Panc1 (cell line): ENCODE measurements at regions of chr12 and their contacts with region 1.

Region 1: GRCh38 chr12:4037747-4038312 is 164.6 kb upstream of the PARP11 start:
- DNase-seq: no peak
- ATAC-seq: no peak
- H3K4me3 ChIP-seq: no peak overlapping the region
- H3K27ac ChIP-seq: no peak overlapping the region
- H3K4me1 ChIP-seq: no peaks in the 10 kb centered on the region
- H3K27me3 ChIP-seq: no peaks in the 10 kb centered on the region; the same call in 1 of the 2 replicates
- CTCF ChIP-seq: peak; percentile 70

Region 2: GRCh38 chr12:3885277-3886094 is 152.3 kb before region 1 on chr12:
- CTCF ChIA-PET with region 1: no interaction called
- POLR2A ChIA-PET with region 1: no interaction called
- in situ Hi-C with region 1: no loop called
- intact Hi-C with region 1: loop called (anchors 5 kb)
- DNase-seq: peak; percentile 20
- ATAC-seq: no peak
- H3K4me3 ChIP-seq: no peak overlapping the region
- H3K27ac ChIP-seq: no peak overlapping the region
- H3K4me1 ChIP-seq: no peaks in the 10 kb centered on the region
- H3K27me3 ChIP-seq: peaks cover 6% of the 10 kb centered on the region
- CTCF ChIP-seq: peak; percentile 76

Region 3: DNA sequence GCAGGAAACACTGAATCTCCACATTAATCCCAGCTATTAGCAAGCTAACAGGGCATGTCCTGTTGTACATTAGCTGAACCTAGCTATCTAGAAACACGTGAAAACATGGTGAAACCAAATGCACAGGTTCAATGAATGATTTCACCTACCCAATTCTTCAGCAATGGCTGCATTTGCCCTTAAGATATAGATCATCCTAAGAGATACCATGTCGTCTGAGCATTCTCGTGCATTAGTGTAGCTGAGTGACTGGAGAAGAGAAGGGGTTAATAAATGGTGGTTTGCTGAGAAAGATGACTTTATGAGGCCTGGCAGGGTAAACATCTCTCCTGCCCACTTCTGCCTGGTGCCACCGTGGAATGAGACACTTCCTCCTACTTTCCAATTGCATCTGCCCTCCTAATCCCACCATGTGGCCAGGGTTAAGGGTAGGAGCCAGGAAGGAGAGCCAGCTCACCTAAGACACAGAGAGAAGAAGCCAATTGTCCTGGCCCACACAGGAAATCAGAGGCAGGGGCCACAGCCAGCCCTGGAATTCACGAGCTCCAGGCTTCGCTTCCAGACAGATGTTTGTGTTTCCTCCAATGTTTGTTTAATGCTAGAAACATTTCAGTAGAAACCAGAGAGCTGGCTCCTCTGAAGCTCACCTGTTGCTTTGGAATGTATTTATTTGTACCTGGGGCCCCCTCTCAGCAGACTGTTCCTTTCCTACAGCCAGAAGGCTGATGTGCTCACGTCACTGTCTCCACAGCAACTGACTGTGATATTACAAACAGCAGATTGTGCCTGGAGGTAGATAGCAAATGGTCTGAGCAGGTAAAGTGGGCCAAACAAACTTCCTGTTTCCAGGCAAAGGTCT is 38.6 kb before region 1 on chr12:
- CTCF ChIA-PET with region 1: interaction called, 5 read pairs
- POLR2A ChIA-PET with region 1: no interaction called
- in situ Hi-C with region 1: no loop called
- intact Hi-C with region 1: loop called (anchors 5 kb)
- DNase-seq: no peak
- ATAC-seq: no peak
- H3K4me3 ChIP-seq: no peak overlapping the region
- H3K27ac ChIP-seq: no peak overlapping the region
- H3K4me1 ChIP-seq: no peaks in the 10 kb centered on the region
- H3K27me3 ChIP-seq: no peaks in the 10 kb centered on the region; the same call in 1 of the 2 replicates
- CTCF ChIP-seq: no peak

Region 4: DNA sequence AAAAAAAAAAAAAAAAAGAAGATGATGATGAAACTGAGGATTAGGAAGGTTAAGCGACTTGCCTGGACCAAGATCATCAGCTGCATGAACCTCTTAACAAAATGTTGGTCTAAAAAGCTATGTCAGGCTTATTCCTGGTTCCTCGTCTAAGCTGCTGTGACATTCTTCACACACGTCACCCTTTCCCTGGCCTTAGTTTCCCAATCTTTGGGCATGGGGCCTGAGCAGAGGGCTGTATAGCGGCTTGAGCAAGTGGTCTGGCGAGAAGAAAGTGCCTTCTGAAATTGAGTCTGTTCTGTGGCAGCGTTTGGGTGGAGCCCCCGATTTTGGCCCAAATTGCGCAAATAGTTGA is 177.0 kb after region 1 on chr12:
- CTCF ChIA-PET with region 1: no interaction called
- POLR2A ChIA-PET with region 1: no interaction called
- in situ Hi-C with region 1: no loop called
- intact Hi-C with region 1: no loop called
- DNase-seq: no peak
- ATAC-seq: no peak
- H3K4me3 ChIP-seq: no peak overlapping the region
- H3K27ac ChIP-seq: no peak overlapping the region
- H3K4me1 ChIP-seq: no peaks in the 10 kb centered on the region
- H3K27me3 ChIP-seq: peaks cover 4% of the 10 kb centered on the region; the same call in 1 of the 2 replicates
- CTCF ChIP-seq: no peak